Aorta (tissue), 5 donors: ENCODE measurements at regions of chr2 and their contacts with region 1.

Region 1: GRCh38 chr2:37877457-37878315 is 47.4 kb upstream of the RMDN2 start:
- DNase-seq: no peak
- ATAC-seq: peak; percentile 70
- H3K4me3 ChIP-seq: no peak overlapping the region
- H3K27ac ChIP-seq: no peak overlapping the region
- H3K4me1 ChIP-seq: no peaks in the 10 kb centered on the region
- H3K27me3 ChIP-seq: no peaks in the 10 kb centered on the region

Region 2: DNA sequence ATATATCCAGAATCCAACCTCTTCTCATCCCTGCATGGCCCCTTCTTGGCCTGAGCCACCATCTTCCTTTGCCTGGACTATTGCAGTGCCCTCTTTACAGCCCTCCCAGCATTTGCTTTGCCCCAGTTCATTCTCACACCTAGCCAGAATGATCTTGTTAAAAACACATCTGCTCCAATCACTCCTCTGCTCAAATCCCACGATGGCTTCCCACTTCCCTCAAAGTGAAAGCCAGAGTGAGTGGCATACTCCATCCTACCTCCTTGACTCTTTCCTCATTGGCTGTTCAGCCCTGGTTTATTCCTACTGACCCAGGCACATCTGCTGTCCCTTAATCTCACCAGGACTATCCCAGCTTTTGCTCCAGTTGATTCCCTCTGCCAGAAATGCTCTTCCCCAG is 703.9 kb before region 1 on chr2:
- intact Hi-C with region 1: loop called in 1 of 2 experiments (anchors 10 kb)
- DNase-seq: no peak
- ATAC-seq: no peak
- H3K4me3 ChIP-seq: no peak overlapping the region
- H3K27ac ChIP-seq: no peak overlapping the region
- H3K4me1 ChIP-seq: no peaks in the 10 kb centered on the region
- H3K27me3 ChIP-seq: no peaks in the 10 kb centered on the region

Region 3: DNA sequence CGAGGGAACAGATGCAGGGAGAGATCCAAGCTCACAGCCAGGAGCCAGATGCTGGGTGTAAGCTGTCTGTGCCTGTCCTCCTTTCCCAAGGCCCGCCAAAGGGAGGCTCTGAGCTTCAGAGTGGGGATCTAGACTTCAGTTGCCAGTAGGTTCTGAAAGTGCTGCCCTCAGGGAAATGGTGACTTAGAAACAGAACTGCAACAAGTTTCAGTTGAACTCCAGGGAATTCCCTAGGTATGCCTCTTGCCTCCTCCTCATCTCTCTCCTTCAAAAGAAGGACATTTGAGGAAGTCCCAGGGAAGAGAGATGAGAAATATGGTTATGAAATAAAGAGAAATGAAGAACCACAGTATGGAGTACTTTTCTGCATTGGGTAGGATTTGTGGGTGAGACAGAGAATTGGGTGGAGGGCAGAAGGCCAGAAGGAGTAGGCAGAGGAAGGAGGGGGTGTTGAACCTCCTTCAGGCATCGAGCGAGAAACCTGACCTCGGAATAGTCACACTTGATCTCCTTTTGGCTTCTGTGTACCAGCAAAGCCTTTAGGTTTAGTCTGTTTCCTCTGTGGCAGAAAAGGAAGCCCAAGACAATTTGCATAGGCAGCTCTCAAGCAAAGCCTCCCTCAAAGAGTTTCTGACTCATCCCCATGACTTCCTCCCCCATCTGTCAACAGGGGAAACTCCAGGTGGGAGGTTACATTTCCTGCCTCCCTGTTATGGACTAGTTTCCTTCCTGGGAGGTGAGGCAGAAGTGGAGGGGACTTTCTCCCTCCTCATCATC is 487.5 kb before region 1 on chr2:
- intact Hi-C with region 1: loop called (anchors 5 kb)
- DNase-seq: no peak
- ATAC-seq: peak; percentile 34
- H3K4me3 ChIP-seq: no peak overlapping the region
- H3K27ac ChIP-seq: no peak overlapping the region
- H3K4me1 ChIP-seq: no peaks in the 10 kb centered on the region
- H3K27me3 ChIP-seq: no peaks in the 10 kb centered on the region

Region 4: DNA sequence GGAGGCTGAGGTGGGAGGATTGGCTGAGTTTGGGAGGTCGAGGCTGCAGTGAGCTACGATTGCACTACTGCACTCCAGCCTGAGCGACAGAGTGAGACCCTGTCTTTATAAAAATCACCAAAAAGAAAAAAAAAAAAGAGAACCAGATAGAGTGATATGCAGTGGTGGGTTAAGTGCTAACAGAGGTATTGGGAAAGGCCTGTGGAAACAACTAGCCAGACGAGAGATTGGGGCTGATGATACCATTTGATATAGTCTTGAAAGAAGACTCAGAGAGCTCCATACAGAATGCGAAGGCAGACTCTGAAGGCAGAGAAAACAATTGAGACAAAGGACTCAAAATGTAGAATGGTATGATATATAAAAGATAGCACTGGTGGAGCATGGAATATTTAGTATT is 340.4 kb before region 1 on chr2:
- intact Hi-C with region 1: loop called in 1 of 2 experiments (anchors 5 kb)
- DNase-seq: no peak
- ATAC-seq: no peak
- H3K4me3 ChIP-seq: no peak overlapping the region
- H3K27ac ChIP-seq: no peak overlapping the region
- H3K4me1 ChIP-seq: no peaks in the 10 kb centered on the region
- H3K27me3 ChIP-seq: no peaks in the 10 kb centered on the region

Region 5: DNA sequence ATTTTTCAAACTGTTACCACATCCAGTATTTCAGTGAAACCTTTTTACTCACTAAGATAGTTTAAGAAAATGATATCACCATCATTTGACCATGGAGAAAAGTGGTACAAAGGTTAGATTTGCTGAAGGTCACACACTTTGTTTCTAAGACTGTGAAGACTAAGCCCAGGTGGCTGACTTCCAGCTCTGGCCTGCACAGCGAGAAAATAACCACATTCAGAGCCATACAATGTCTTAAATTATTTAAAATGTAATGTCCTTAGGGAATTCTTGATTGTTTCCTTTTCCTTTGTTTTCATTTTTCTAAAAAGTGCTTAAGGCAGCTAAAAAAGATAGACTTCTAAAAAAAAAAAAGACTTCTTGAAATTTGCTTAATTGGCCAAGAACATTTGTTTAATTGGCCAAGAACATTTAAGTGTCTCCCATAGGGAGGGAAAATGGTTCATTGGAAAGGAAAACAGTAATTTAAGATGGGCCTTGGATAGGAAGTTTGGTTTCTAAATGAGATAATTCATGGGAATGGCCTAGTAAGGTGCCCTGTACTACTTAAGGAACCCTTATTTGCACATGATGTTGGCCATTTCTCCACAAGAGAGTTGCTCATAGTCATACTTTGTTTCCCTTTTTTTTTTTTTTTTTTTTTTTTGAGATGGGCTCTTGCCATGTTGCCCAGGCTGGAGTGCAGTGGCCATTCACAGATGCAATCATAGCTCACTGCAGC is 153.1 kb after region 1 on chr2:
- intact Hi-C with region 1: no loop called
- DNase-seq: no peak
- ATAC-seq: peak; percentile 26
- H3K4me3 ChIP-seq: no peak overlapping the region
- H3K27ac ChIP-seq: no peak overlapping the region
- H3K4me1 ChIP-seq: no peaks in the 10 kb centered on the region
- H3K27me3 ChIP-seq: no peaks in the 10 kb centered on the region